Motor neuron (in vitro differentiated cells): ENCODE measurements at regions of chr15 and their contacts with region 1.

Region 1: GRCh38 chr15:51380999-51381795 is 39.7 kb downstream of the GLDN start:
- ATAC-seq: peak in 7 of 8 experiments; percentile 39 to 98 (median 90)
- H3K4me3 ChIP-seq: no peak overlapping the region
- H3K27ac ChIP-seq: no peak overlapping the region
- H3K4me1 ChIP-seq: no peaks in the 10 kb centered on the region

Region 2: GRCh38 chr15:50774450-50774849 is 606.7 kb before region 1 on chr15:
- in situ Hi-C with region 1: no loop called
- ATAC-seq: no peak
- H3K4me3 ChIP-seq: no peak overlapping the region
- H3K27ac ChIP-seq: no peak overlapping the region
- H3K4me1 ChIP-seq: no peaks in the 10 kb centered on the region

Region 3: GRCh38 chr15:51223782-51224229 is 157.4 kb before region 1 on chr15:
- in situ Hi-C with region 1: loop called in 1 of 9 experiments (anchors 25 kb)
- ATAC-seq: peak in 2 of 8 experiments; percentile 11 to 38
- H3K4me3 ChIP-seq: no peak overlapping the region
- H3K27ac ChIP-seq: no peak overlapping the region
- H3K4me1 ChIP-seq: peaks cover 3 to 5% of the 10 kb centered on the region in 2 donors

Region 4: DNA sequence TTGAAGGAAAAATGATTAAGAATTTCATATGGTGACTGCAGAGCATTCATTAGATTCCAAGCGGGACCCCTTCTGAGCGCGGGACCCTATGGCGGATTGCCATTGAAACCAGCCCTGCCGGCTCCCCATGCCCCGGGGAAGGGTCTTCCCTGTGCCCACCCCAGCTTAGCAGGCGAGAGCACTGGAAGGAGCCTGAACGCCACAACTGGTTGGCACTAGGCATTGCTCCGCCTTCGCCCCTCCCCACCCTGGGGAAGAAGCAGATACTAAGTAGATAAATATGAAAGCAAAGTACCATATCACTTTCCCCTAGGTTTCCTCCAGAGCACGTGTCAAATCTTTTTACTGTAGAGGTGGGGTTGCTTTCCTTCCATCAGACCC is 113.5 kb before region 1 on chr15:
- in situ Hi-C with region 1: loop called in 1 of 9 experiments (anchors 25 kb)
- ATAC-seq: peak; percentile 11 to 69 (median 44)
- H3K4me3 ChIP-seq: peak overlapping the region in 3 of 5 donors; percentile 25 to 35 (median 35)
- H3K27ac ChIP-seq: no peak overlapping the region
- H3K4me1 ChIP-seq: peaks cover 13 to 14% of the 10 kb centered on the region in 2 donors

Region 5: GRCh38 chr15:51281368-51281967 is 99.7 kb before region 1 on chr15:
- in situ Hi-C with region 1: loop called in 1 of 9 experiments (anchors 10 kb)
- ATAC-seq: peak in 5 of 8 experiments; percentile 40 to 99 (median 97)
- H3K4me3 ChIP-seq: no peak overlapping the region
- H3K27ac ChIP-seq: no peak overlapping the region
- H3K4me1 ChIP-seq: peaks cover 9 to 13% of the 10 kb centered on the region in 2 donors

Region 6: DNA sequence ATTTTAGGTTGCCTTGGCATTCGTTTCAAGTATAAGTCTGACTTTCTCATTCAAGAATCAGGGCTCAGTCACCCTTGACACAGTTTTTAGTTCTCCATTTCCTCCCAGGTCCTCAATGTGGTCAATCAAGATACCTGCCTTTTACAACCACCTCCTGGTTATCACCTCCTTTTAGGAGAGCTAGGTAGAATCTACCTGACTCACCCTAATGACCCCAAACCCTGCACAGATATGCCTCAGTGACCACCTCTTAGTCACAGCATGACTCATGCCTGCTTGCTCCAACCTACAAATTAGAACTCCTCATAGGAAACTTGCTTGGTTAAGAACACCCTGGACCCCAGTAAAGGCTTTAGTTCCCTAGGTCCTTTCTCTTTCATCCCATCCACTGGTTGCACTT is 218.9 kb after region 1 on chr15:
- in situ Hi-C with region 1: no loop called
- ATAC-seq: no peak
- H3K4me3 ChIP-seq: no peak overlapping the region
- H3K27ac ChIP-seq: no peak overlapping the region
- H3K4me1 ChIP-seq: no peaks in the 10 kb centered on the region

Region 7: DNA sequence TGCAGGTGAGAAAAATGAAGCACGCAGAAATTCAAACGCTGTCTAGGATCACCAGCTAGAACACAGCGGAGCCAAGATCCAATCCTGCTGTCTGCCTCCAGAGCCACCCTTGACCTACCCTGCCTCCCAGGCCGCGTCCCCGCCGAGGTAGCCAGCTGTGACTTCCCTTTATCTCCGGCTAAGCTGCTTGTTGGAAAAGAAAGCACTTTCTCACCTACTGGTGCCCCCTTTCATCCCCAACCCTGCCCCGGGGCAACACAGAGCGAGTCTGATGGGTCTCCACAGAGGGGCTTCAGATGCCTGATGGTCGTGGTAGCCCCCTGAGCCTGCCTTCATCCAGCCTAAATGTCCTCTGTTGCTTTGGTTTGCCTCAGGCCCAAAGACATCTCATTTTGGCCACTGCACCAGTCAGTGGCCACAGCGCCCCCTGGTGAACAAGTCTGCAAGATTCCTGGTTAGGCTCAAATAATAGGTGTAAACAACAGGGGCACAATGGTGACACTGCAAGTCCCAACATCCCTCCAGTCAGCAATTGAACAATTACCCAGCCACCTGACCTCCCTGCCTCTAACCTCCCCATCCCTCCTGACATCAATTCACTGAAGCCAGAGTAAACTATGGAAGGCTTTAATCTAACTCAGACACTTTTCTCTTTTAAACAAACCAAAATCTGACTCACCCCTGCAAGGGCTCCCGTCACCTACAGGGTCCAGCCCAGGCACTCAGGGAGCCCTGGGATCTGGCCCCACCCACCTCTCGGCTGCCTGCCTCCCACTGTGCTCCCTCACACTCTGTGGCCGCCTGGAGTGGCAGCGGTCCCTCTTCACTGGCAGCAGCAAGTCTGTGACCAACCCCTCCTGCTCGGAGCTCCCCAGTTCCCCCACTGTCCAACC is 758.6 kb after region 1 on chr15:
- in situ Hi-C with region 1: no loop called
- ATAC-seq: peak; percentile 62 to 87 (median 66)
- H3K4me3 ChIP-seq: no peak overlapping the region
- H3K27ac ChIP-seq: no peak overlapping the region
- H3K4me1 ChIP-seq: no peaks in the 10 kb centered on the region